Activated B cell treated with CpG ODN at 0.5 μM for 24 hours (primary cell): ENCODE measurements at regions of chr16 and their contacts with region 1.

Region 1: GRCh38 chr16:4402439-4403132 is 13.8 kb downstream of the CORO7 start:
- DNase-seq: peak; percentile 75
- ATAC-seq: peak; percentile 86
- H3K4me3 Mint-ChIP-seq: no peak overlapping the region
- H3K27ac Mint-ChIP-seq: no peak overlapping the region
- H3K4me1 Mint-ChIP-seq: peaks cover 2% of the 10 kb centered on the region
- H3K27me3 Mint-ChIP-seq: no peaks in the 10 kb centered on the region
- CTCF ChIP-seq: peak; percentile 59

Region 2: GRCh38 chr16:3938848-3939624 is 463.6 kb before region 1 on chr16:
- CTCF ChIA-PET with region 1: interaction called, 6 read pairs
- POLR2A ChIA-PET with region 1: no interaction called
- intact Hi-C with region 1: loop called (anchors 1 kb)
- DNase-seq: peak; percentile 68
- ATAC-seq: peak; percentile 81
- H3K4me3 Mint-ChIP-seq: no peak overlapping the region
- H3K27ac Mint-ChIP-seq: no peak overlapping the region
- H3K4me1 Mint-ChIP-seq: peaks cover 3% of the 10 kb centered on the region
- H3K27me3 Mint-ChIP-seq: peaks cover 4% of the 10 kb centered on the region
- CTCF ChIP-seq: peak; percentile 36

Region 3: DNA sequence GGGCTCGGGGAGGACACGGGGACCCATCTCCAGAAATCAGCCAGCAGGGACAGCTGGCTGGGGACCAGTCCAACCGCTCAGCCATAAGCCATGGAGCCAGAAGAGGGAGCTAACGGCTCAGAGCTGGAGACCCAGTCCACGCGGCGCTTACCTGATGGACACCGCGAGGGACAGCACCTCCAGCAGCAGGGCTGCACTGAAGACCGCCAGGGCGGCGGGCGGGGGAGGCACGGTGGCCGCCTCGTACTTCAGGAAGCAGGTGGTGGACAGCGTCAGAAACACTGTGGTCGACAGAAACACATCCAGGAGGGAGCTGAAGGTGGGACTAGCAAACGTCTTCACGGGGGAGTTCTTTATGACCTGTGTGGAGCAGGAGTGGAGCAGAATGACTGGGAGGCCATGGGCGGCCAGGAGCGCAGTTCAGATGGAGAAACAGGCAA is 419.5 kb before region 1 on chr16:
- CTCF ChIA-PET with region 1: no interaction called
- POLR2A ChIA-PET with region 1: no interaction called
- intact Hi-C with region 1: loop called (anchors 2 kb)
- DNase-seq: no peak
- ATAC-seq: no peak
- H3K4me3 Mint-ChIP-seq: no peak overlapping the region
- H3K27ac Mint-ChIP-seq: no peak overlapping the region
- H3K4me1 Mint-ChIP-seq: no peaks in the 10 kb centered on the region
- H3K27me3 Mint-ChIP-seq: peaks cover 11% of the 10 kb centered on the region
- CTCF ChIP-seq: no peak

Region 4: GRCh38 chr16:4288148-4288921 is 114.3 kb before region 1 on chr16:
- CTCF ChIA-PET with region 1: interaction called, 13 read pairs
- POLR2A ChIA-PET with region 1: no interaction called
- intact Hi-C with region 1: loop called (anchors 1 kb)
- DNase-seq: peak; percentile 78
- ATAC-seq: peak; percentile 95
- H3K4me3 Mint-ChIP-seq: no peak overlapping the region
- H3K27ac Mint-ChIP-seq: no peak overlapping the region
- H3K4me1 Mint-ChIP-seq: peaks cover 9% of the 10 kb centered on the region
- H3K27me3 Mint-ChIP-seq: peaks cover 15% of the 10 kb centered on the region
- CTCF ChIP-seq: peak; percentile 79

Region 5: DNA sequence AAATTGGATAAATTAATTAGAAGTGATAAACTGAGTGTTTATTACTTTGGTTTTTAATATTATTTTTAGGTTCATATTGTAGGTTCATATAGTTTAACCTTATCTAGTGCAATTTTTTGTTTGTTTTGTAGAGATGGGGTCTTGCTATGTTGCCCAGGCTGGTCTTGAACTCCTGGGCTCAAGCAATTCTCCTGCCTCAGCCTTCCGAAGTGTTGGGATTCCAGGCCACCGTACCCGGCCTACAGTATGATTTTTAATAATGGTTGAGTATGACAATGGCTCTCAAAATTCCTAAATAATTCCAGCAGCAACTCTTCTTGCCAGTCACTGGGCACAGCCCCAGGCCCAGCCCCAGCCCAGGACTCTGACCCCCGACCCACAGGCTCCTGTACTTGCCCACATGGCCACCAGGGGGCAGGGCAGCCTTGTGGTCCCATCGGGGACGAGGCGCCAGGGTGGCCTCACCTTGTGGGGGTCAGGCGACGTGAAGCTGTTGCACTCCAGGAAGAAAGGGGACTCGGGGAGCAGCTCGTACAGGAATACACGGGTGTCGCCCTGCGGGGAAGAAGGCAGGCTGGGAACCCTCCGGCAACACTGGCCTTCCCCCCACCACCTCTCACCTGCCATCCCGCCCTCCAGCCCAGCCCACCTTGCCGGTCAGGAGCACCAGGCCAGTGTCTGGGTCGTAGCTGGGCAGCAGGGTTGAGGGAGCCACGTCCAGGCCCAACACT is 43.6 kb before region 1 on chr16:
- CTCF ChIA-PET with region 1: interaction called, 43 read pairs
- POLR2A ChIA-PET with region 1: interaction called, 3 read pairs
- intact Hi-C with region 1: loop called (anchors 1 kb)
- DNase-seq: peak; percentile 68
- ATAC-seq: peak; percentile 83
- H3K4me3 Mint-ChIP-seq: no peak overlapping the region
- H3K27ac Mint-ChIP-seq: no peak overlapping the region
- H3K4me1 Mint-ChIP-seq: peaks cover 13% of the 10 kb centered on the region
- H3K27me3 Mint-ChIP-seq: no peaks in the 10 kb centered on the region
- CTCF ChIP-seq: peak; percentile 56

Region 6: GRCh38 chr16:4365014-4365406 is 37.6 kb before region 1 on chr16:
- CTCF ChIA-PET with region 1: interaction called, 43 read pairs
- POLR2A ChIA-PET with region 1: interaction called, 3 read pairs
- intact Hi-C with region 1: no loop called
- DNase-seq: peak; percentile 62
- ATAC-seq: peak; percentile 91
- H3K4me3 Mint-ChIP-seq: no peak overlapping the region
- H3K27ac Mint-ChIP-seq: peak overlapping the region; percentile 35
- H3K4me1 Mint-ChIP-seq: peaks cover 37% of the 10 kb centered on the region
- H3K27me3 Mint-ChIP-seq: no peaks in the 10 kb centered on the region
- CTCF ChIP-seq: no peak